ENCODE measurements at regions of chr7 and their contacts with region 1.

Region 1: GRCh38 chr7:71808115-71808514 is 604.0 kb downstream of the CALN1 start:
- DNase-seq: no peak
- ATAC-seq: no peak

Region 2: DNA sequence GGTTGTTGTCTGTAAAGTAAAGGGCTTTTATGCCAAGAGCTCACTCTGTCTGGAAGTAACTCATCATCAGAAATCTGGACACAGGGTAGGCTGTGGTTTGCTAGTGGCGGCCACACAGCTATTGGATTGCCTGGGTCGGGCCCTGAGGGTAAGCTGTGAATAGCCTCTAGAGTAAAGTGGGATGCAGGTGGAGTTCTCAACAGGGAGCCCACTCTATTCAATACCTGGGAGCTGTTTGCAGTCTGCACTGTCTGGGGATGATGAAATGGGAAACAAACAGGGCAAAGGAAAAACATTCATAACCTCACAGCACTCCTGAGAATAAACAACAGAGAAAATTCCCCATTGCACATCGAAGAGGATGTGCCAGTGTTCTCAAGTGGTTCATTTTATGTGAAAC is 21.4 kb after region 1 on chr7:
- intact Hi-C with region 1: loop called (anchors 2 kb)
- DNase-seq: no peak
- ATAC-seq: no peak